ENCODE measurements at regions of chr1 and their contacts with region 1.

Region 1: DNA sequence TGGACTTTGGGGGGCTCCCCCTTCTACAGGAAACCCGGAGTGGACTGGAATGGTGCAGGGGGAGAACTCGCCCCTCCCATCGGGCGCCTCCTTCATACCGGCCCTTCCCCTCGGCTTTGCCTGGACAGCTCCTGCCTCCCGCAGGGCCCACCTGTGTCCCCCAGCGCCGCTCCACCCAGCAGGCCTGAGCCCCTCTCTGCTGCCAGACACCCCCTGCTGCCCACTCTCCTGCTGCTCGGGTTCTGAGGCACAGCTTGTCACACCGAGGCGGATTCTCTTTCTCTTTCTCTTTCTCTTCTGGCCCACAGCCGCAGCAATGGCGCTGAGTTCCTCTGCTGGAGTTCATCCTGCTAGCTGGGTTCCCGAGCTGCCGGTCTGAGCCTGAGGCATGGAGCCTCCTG is at the start of gene TNFRSF14:
- DNase-seq: peak; percentile 50 to 92 (median 72)
- ATAC-seq: peak; percentile 75
- H3K4me3 ChIP-seq: peak within 1 kb of the TSS; percentile 67 to 99
- H3K4me3 Mint-ChIP-seq: peak within 1 kb of the TSS; percentile 99
- H3K27ac ChIP-seq: peak within 1 kb of the TSS; percentile 89 to 98
- H3K27ac Mint-ChIP-seq: peak within 1 kb of the TSS; percentile 99
- H3K4me1 ChIP-seq: peaks cover 37% of the 10 kb centered on the region
- H3K4me1 Mint-ChIP-seq: peaks cover 42% of the 10 kb centered on the region
- H3K27me3 ChIP-seq: no peaks in the 10 kb centered on the region
- H3K27me3 Mint-ChIP-seq: no peaks in the 10 kb centered on the region
- CTCF ChIP-seq: peak; percentile 19
- total RNA-seq, gene TNFRSF14: 158 to 160 TPM

Region 2: DNA sequence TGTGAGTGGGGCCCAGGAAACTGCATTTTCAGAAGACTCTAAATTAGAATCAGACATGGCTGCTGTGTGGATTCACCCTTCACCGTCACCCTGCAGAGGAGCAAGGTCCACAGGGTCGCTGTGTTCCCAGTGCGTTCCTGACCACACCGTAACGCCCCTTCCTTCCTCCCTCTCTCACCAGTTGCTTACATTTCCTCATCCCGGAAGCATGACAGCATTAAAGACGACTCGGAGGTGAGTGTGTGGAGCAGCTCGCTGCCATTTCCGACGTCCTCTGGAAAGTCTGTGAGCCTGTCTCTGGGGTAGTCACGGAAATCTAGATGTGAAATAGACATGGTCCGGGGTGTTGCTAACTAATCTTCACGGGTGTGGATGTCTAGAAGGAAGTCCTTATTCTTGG is 407.6 kb before region 1 on chr1:
- CTCF ChIA-PET with region 1: no interaction called
- POLR2A ChIA-PET with region 1: no interaction called
- intact Hi-C with region 1: no loop called
- DNase-seq: peak; percentile 28 to 89 (median 68)
- ATAC-seq: peak; percentile 61
- H3K4me3 ChIP-seq: peak overlapping the region; percentile 2 to 18
- H3K4me3 Mint-ChIP-seq: no peak overlapping the region
- H3K27ac ChIP-seq: peak overlapping the region; percentile 56 to 64
- H3K27ac Mint-ChIP-seq: no peak overlapping the region
- H3K4me1 ChIP-seq: peaks cover 80% of the 10 kb centered on the region
- H3K4me1 Mint-ChIP-seq: peaks cover 37% of the 10 kb centered on the region
- H3K27me3 ChIP-seq: no peaks in the 10 kb centered on the region
- H3K27me3 Mint-ChIP-seq: no peaks in the 10 kb centered on the region
- CTCF ChIP-seq: no peak

Region 3: GRCh38 chr1:2412519-2413233 is 143.6 kb before region 1 on chr1 and contains the start of gene PEX10:
- CTCF ChIA-PET with region 1: interaction called, 8 read pairs
- POLR2A ChIA-PET with region 1: interaction called, 11 read pairs
- intact Hi-C with region 1: no loop called
- DNase-seq: peak; percentile 97 to 100 (median 99)
- ATAC-seq: peak; percentile 91
- H3K4me3 ChIP-seq: peak within 1 kb of the TSS; percentile 64 to 89
- H3K4me3 Mint-ChIP-seq: peak within 1 kb of the TSS; percentile 86
- H3K27ac ChIP-seq: peak within 1 kb of the TSS; percentile 81 to 93
- H3K27ac Mint-ChIP-seq: peak within 1 kb of the TSS; percentile 93
- H3K4me1 ChIP-seq: peaks cover 53% of the 10 kb centered on the region
- H3K4me1 Mint-ChIP-seq: peaks cover 40% of the 10 kb centered on the region
- H3K27me3 ChIP-seq: no peaks in the 10 kb centered on the region
- H3K27me3 Mint-ChIP-seq: no peaks in the 10 kb centered on the region
- CTCF ChIP-seq: no peak
- total RNA-seq, gene PEX10: 11.6 to 11.8 TPM

Region 4: GRCh38 chr1:2578758-2579118 is 22.5 kb after region 1 on chr1:
- CTCF ChIA-PET with region 1: interaction called, 28 read pairs
- POLR2A ChIA-PET with region 1: interaction called, 98 read pairs
- intact Hi-C with region 1: loop called in 1 of 2 experiments (anchors 1 kb)
- DNase-seq: peak in 1 of 9 experiments; percentile 51
- ATAC-seq: no peak
- H3K4me3 ChIP-seq: peak overlapping the region; percentile 28 to 43
- H3K4me3 Mint-ChIP-seq: peak overlapping the region; percentile 76
- H3K27ac ChIP-seq: peak overlapping the region; percentile 81 to 93
- H3K27ac Mint-ChIP-seq: peak overlapping the region; percentile 96
- H3K4me1 ChIP-seq: peaks cover 57% of the 10 kb centered on the region
- H3K4me1 Mint-ChIP-seq: peaks cover 51% of the 10 kb centered on the region
- H3K27me3 ChIP-seq: no peaks in the 10 kb centered on the region
- H3K27me3 Mint-ChIP-seq: no peaks in the 10 kb centered on the region
- CTCF ChIP-seq: no peak

Region 5: DNA sequence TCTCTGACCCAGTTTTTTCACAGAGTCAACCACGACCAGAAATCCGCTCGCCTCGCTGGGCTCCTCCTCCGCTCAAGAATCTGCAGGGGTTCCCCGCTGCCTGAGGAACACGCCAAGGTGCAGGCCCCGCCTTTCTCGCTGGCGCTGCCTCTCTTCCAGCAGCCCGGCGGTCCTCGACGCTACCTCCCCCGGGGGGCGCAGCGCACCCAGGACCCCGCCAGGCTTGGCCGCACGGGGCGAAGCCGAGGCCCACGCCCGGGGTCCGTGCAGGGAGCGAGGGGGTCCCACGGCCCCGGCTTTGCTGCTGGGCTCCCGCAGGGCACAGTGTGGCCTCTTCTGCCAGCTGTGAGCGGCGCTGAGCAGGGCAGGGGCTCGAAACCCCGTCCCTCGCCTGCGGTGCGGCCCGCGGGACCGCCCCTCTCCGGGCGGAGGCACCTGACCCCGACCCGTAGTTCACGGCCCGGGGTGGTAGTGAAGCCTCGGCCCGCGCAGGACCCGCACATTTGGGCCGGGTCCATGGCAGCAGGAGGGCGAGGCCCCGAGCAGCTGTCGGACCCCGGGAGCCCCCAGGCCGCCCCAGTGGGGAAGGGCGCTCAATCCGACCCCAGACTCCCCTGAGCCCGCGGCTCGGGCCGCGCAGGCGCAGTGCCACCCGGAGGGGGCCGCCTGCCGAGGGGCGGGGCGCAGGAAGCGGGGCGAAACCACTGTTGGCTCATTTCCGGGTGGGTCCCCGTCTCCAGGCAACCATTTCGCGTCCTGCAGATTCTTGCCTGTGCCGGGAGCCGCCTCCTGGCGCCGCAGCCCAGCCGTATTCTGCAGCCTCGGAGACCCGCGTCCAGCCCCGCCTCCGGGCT is 86.5 kb after region 1 on chr1:
- CTCF ChIA-PET with region 1: interaction called, 3 read pairs
- POLR2A ChIA-PET with region 1: interaction called, 6 read pairs
- intact Hi-C with region 1: loop called (anchors 1 kb)
- DNase-seq: peak; percentile 88 to 97 (median 96)
- ATAC-seq: peak; percentile 84
- H3K4me3 ChIP-seq: peak overlapping the region; percentile 63 to 95
- H3K4me3 Mint-ChIP-seq: peak overlapping the region; percentile 85
- H3K27ac ChIP-seq: peak overlapping the region; percentile 91 to 93
- H3K27ac Mint-ChIP-seq: peak overlapping the region; percentile 88
- H3K4me1 ChIP-seq: peaks cover 17% of the 10 kb centered on the region
- H3K4me1 Mint-ChIP-seq: peaks cover 13% of the 10 kb centered on the region
- H3K27me3 ChIP-seq: no peaks in the 10 kb centered on the region
- H3K27me3 Mint-ChIP-seq: no peaks in the 10 kb centered on the region
- CTCF ChIP-seq: no peak

Region 6: GRCh38 chr1:2840036-2840809 is 283.9 kb after region 1 on chr1:
- CTCF ChIA-PET with region 1: interaction called, 3 read pairs
- POLR2A ChIA-PET with region 1: no interaction called
- intact Hi-C with region 1: loop called in 1 of 2 experiments (anchors 1 kb)
- DNase-seq: peak; percentile 42 to 86 (median 68)
- ATAC-seq: peak; percentile 90
- H3K4me3 ChIP-seq: peak overlapping the region in 1 of 2 experiments; percentile 21
- H3K4me3 Mint-ChIP-seq: peak overlapping the region; percentile 76
- H3K27ac ChIP-seq: peak overlapping the region; percentile 18 to 63
- H3K27ac Mint-ChIP-seq: peak overlapping the region; percentile 81
- H3K4me1 ChIP-seq: peaks cover 17% of the 10 kb centered on the region
- H3K4me1 Mint-ChIP-seq: peaks cover 20% of the 10 kb centered on the region
- H3K27me3 ChIP-seq: no peaks in the 10 kb centered on the region
- H3K27me3 Mint-ChIP-seq: no peaks in the 10 kb centered on the region
- CTCF ChIP-seq: peak; percentile 54